Posterior vena cava (tissue), 2 donors: ENCODE measurements at regions of chr17 and their contacts with region 1.

Region 1: GRCh38 chr17:79045842-79046196 is 21.9 kb downstream of the C1QTNF1 start:
- DNase-seq: peak; percentile 93

Region 2: DNA sequence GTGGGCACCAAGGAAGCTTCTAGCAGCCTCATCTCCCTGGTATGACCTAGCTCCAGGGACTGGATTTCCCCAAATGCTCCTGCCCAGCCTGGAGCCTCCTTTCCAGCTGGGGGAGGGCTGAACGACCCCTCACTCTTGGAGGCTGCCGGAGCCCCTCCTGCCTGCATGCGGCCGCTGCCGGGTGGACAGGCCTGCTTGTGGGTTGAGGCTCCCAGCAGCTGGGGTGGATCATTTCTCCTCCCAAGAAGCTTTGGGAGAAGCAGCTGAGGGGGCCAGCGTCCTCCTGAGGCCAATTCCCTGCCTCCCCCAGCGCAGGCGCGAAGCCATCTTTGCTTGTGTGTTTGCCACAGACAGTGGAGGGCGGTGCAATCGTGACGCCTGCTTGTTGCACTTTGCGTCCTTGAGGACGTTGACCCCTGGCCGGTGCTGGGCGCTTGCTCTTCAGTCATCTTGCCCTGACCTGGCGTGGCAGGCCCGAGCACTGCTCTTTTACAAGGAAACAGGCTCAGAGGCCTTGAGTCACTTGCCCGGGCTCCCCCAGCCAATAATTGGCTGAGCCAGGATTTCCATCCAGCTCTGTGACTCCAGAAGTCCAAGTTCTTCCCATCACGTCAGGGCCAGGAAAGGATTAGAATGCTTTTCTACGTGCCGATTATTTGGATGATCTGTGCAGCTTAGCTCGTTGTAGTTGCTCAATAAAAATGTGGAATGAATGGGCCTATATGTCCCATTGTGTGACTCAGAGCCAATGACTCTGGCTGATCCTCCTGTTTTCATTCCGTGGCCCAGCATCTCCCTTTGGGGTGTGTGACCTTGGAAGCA is 1691.2 kb before region 1 on chr17:
- intact Hi-C with region 1: no loop called
- DNase-seq: peak; percentile 97

Region 3: GRCh38 chr17:78933959-78934568 is 111.8 kb before region 1 on chr17:
- intact Hi-C with region 1: no loop called
- DNase-seq: peak; percentile 99

Region 4: DNA sequence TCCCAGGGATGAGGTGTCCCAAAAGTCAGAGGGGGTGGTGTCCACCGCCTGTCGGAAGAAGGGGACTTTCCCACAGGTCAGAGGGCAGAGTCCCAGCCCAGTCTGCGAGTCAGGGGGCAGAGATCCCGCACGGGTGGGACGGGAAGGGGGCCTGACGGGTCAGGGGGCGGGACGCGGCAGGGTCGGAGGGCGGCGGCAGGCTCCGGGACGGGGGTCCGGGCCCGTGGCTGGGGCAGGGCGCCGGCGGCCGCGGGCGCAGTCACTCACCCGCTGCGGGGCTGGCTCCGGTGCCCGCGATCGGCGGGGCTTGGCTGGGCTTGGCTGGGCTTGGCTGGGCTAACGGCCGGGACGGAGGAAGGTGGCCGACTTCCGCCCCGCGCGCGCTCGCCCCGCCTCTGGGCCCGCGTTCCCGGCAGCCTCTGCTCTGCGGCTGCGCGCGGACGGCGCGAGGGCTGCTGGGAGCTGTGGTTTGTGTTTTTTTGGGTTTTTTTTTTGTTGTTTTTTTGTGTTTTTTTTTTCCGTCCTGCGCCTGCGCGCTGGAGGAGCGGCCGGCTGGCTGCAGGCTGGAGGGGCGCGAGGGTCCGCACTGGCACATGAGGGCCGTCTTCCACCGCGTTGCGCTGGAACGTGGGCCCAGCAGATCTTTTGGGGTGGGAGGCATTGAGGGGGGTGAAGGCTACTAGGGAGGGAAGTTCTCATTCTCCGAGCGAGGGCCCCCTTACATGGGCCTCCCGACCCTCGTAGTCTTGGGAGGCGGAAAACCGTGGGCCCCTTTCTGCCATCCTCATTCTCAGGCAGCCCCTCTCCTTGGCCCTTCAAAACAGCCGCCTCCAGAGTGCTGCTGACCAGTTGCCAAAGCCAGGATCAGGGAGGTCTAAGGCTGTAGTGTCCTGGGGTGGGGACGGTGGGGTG is 36.2 kb before region 1 on chr17 and contains the start of gene CANT1:
- intact Hi-C with region 1: no loop called
- DNase-seq: peak; percentile 96
- total RNA-seq, gene CANT1: 29.5 to 34.7 TPM

Region 5: GRCh38 chr17:79082311-79083190 is 36.7 kb after region 1 on chr17:
- intact Hi-C with region 1: loop called in 1 of 2 experiments (anchors 5 kb)
- DNase-seq: no peak

Region 6: DNA sequence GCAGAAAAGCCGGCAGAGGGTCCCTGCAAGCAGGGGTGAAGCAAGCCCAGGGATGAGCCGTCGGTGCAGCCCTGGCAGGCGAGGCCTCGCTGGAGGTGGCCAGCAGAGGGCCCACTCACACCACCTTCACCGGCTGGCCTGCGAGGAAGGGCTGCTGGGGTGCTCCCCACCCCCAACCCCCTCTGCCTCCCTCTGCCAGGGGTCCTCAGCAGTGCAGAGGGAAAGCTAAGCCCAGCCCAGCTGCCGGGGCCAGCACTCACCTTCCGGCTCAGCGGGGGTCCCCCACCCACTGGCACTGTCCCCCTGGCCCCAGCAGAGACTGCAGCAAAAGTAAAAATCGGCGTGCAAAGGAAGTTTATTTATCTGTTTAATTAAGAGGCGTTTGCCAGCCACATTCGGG is 142.2 kb after region 1 on chr17:
- intact Hi-C with region 1: loop called in 1 of 2 experiments (anchors 2 kb)
- DNase-seq: no peak